CD14-positive monocyte (primary cell): ENCODE measurements at regions of chr3 and their contacts with region 1.

Region 1: DNA sequence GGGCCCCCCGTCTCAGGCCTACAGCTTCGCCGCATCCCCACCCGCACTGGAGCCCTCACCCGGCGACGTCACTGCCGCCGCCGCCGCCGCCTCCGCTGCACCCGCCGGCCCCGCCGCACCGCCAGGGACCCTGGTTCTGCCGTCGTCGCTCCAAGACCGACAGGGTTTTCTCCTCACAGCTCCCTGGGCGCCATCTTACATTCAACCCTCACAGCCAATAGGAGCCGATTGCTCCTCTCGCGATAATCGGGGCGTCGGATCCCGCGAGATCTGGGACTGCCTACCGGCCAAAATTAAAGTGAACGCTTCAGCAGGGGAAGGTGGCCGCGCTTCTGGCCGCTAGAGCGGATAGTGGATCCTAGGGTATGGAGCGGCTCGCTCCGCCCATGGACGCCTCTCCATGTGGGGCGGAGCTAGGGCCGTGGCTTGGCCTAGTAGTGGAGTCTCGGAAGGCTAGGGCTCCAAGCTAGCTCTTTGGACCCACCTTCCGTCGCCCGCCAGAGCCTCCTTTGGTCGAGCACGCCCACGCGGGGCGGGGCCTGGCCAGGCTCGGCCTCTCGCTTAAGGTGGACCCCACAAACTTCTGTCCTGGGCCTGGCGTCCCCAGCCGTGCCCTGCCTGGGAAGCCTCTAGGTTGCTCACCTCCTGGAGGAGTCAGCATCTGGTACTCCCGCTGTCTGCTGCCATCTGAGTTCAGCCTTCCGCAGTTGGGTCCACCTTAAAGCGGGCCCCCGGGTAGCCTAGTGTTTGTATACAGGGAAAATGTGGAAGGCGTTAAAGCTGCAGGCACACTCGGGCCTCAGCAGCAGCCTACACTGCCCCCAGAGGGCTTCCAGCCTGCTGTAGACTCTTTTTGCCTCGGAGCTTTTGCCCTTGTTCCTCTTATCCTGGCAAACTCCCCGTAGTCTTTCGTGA is at the start of gene QRICH1:
- DNase-seq: peak; percentile 94 to 96 (median 95)
- H3K4me3 ChIP-seq: peak within 1 kb of the TSS; percentile 55 to 87 (median 78)
- H3K4me3 Mint-ChIP-seq: peak within 1 kb of the TSS; percentile 87 to 93
- H3K27ac ChIP-seq: peak within 1 kb of the TSS; percentile 75 to 93
- H3K27ac Mint-ChIP-seq: peak within 1 kb of the TSS; percentile 92 to 98 (median 96)
- H3K4me1 ChIP-seq: peaks cover 20 to 31% of the 10 kb centered on the region in 2 donors
- H3K4me1 Mint-ChIP-seq: peaks cover 21% of the 10 kb centered on the region
- H3K27me3 ChIP-seq: no peaks in the 10 kb centered on the region
- H3K27me3 Mint-ChIP-seq: no peaks in the 10 kb centered on the region
- CTCF ChIP-seq: peak; percentile 49
- polyA plus RNA-seq, gene QRICH1: 9.3 to 150 (median 16.1) TPM

Region 2: DNA sequence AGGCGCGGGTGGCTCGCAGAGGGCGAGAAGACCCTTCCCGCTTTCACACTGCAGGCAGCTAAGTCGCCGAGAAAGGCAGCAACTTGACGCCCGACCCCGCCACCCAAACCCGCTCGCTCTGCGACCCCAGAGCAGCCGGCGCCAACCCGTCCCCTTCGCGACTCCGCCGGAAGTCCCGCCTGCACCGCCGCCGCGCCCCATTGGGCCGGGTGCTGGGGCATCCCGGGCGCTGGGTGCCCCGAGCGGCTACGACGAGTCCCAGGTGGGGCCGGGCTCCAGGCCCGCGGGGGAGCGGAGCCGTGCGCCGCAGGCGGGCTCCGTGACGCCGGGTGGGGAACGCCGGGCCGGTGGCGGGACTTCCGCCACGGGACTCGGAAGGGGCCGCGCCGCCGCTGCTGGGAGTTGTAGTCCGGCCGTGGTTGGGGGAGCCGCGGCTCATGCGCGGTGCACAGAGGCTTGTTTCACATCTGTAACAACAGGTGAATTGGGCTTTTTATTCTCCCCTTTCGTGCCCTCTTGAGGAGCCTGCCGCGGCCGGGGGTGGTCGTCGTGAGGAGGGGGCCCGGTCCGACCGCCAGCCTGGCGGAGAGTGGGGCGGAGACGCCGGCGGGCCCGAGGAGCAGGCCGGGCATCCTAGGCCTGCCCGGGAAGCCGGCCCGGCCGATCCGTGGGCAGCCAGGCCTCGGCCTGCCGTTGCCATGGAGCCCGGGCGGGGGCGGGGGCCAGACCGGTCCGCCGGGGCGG is 1291.2 kb before region 1 on chr3 and contains the start of gene DHX30:
- intact Hi-C with region 1: no loop called
- DNase-seq: peak; percentile 60 to 76 (median 69)
- H3K4me3 ChIP-seq: peak within 1 kb of the TSS; percentile 65 to 91 (median 87)
- H3K4me3 Mint-ChIP-seq: peak within 1 kb of the TSS; percentile 88 to 94
- H3K27ac ChIP-seq: peak within 1 kb of the TSS; percentile 58 to 83
- H3K27ac Mint-ChIP-seq: peak within 1 kb of the TSS; percentile 77 to 93 (median 87)
- H3K4me1 ChIP-seq: peaks cover 13 to 17% of the 10 kb centered on the region in 2 donors
- H3K4me1 Mint-ChIP-seq: peaks cover 21% of the 10 kb centered on the region
- H3K27me3 ChIP-seq: no peaks in the 10 kb centered on the region
- H3K27me3 Mint-ChIP-seq: peaks cover 0 to 4% (median 1%) of the 10 kb centered on the region in 3 donors
- CTCF ChIP-seq: no peak
- polyA plus RNA-seq, gene DHX30: 19.4 to 43.9 (median 20.1) TPM

Region 3: GRCh38 chr3:49021813-49022687 is 72.1 kb before region 1 on chr3 and contains the start of gene NDUFAF3:
- intact Hi-C with region 1: loop called (anchors 5 kb)
- DNase-seq: peak; percentile 89 to 93 (median 93)
- H3K4me3 ChIP-seq: peak within 1 kb of the TSS; percentile 71 to 90 (median 84)
- H3K4me3 Mint-ChIP-seq: peak within 1 kb of the TSS; percentile 90 to 92
- H3K27ac ChIP-seq: peak within 1 kb of the TSS; percentile 98
- H3K27ac Mint-ChIP-seq: peak within 1 kb of the TSS; percentile 96 to 99 (median 98)
- H3K4me1 ChIP-seq: peaks cover 41 to 49% of the 10 kb centered on the region in 2 donors
- H3K4me1 Mint-ChIP-seq: peaks cover 34% of the 10 kb centered on the region
- H3K27me3 ChIP-seq: no peaks in the 10 kb centered on the region
- H3K27me3 Mint-ChIP-seq: peaks cover 0 to 2% (median 0%) of the 10 kb centered on the region in 3 donors
- CTCF ChIP-seq: peak; percentile 100
- polyA plus RNA-seq, gene NDUFAF3: 42.1 to 93.4 (median 88.8) TPM

Region 4: DNA sequence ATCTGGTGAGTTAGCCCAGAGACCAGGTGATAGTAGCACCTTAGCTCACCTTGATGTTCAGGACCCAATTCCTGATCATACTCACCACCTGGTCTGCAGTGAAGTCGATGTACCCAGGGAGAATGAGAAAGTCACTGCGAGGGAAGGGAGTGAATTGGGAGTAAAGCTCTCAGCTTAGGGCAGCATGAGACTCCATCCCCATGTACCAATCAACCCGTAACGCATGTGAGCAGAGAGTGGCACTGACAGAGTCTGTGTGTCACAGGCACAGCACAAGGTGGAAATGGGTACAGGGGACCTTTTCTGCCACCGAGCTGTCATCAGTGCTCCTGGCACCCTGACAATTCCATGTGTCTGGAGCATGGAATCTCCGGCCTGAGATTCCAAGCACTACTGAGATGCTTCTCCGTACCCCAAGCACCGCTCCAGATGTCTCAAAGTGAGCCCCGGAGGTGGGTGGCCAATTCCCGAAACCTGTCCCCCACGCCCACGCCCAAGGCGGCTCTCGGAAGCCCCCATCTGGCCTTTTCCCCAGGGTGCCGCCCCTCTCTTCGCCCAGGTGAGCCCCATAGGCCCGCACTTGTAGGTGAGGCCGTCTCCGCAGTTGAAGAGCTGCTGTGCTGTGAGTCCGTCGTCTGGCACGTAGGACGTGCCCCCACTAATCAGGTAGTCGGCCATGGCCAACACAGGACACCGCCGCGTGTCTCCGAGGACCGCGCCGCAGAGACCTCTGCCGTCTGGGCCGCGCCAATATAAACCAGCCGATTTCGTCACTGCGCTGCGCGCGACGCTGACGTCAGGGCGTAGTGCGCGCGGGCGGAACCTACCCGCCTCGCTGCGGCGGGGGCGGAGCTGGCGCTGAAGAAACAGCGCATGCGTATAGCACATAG is 65.2 kb before region 1 on chr3 and contains the start of gene IMPDH2:
- intact Hi-C with region 1: loop called (anchors 5 kb)
- DNase-seq: peak; percentile 95 to 97 (median 96)
- H3K4me3 ChIP-seq: peak within 1 kb of the TSS; percentile 57 to 76 (median 62)
- H3K4me3 Mint-ChIP-seq: peak within 1 kb of the TSS; percentile 79 to 91
- H3K27ac ChIP-seq: peak within 1 kb of the TSS; percentile 77 to 92
- H3K27ac Mint-ChIP-seq: peak within 1 kb of the TSS; percentile 88 to 98 (median 97)
- H3K4me1 ChIP-seq: peaks cover 14 to 20% of the 10 kb centered on the region in 2 donors
- H3K4me1 Mint-ChIP-seq: peaks cover 25% of the 10 kb centered on the region
- H3K27me3 ChIP-seq: no peaks in the 10 kb centered on the region
- H3K27me3 Mint-ChIP-seq: no peaks in the 10 kb centered on the region
- CTCF ChIP-seq: peak; percentile 8
- polyA plus RNA-seq, gene IMPDH2: 20.8 to 67.3 (median 21.0) TPM

Region 5: GRCh38 chr3:49057268-49057667 is 36.8 kb before region 1 on chr3:
- intact Hi-C with region 1: no loop called
- DNase-seq: no peak
- H3K4me3 ChIP-seq: no peak overlapping the region
- H3K4me3 Mint-ChIP-seq: no peak overlapping the region
- H3K27ac ChIP-seq: no peak overlapping the region
- H3K27ac Mint-ChIP-seq: no peak overlapping the region
- H3K4me1 ChIP-seq: no peaks in the 10 kb centered on the region
- H3K4me1 Mint-ChIP-seq: no peaks in the 10 kb centered on the region
- H3K27me3 ChIP-seq: no peaks in the 10 kb centered on the region
- H3K27me3 Mint-ChIP-seq: no peaks in the 10 kb centered on the region
- CTCF ChIP-seq: no peak

Region 6: DNA sequence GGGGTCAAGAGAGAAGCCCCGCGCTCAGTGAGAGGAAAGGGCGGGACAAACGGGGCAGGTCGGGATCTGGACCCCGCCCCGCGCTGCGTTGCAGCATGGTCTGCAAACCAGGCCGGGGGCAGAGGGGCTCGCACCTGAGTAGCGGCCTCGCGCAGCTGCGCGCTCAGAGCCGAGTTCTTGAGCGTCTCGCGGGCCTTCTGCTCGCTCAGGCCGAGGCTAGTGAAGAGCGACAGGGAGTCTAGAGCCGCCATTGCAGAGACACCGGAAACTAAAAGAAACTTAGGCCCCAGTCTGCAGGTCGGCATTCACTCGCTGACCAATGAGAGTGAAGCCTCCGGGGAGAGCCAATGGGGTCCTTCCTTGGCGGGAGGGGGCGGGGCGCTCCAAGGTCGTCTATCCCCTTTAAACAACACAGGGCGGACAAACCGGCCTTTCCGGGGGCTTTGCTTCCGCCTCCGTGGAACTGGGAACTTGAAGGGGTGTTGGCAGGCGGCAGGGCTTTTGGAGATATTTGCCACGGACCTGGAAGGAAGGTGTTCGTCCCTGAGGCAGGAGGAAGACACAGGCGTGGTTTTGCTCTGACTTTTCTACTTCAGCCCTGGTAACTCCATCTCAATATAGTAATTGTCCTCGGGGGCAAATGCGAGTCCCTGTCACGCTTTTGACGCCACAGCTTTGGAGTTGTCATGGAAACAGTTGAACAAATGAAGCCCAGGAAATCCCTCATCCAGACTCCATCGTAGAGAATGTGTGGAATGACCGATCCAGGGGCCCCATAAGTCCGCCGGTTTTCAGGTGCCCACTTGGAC is 10.6 kb after region 1 on chr3 and contains the start of gene QARS1:
- intact Hi-C with region 1: loop called in 1 of 2 experiments (anchors 1 kb)
- DNase-seq: peak; percentile 77 to 89 (median 84)
- H3K4me3 ChIP-seq: peak within 1 kb of the TSS; percentile 80 to 92 (median 84)
- H3K4me3 Mint-ChIP-seq: peak within 1 kb of the TSS; percentile 95 to 98
- H3K27ac ChIP-seq: peak within 1 kb of the TSS; percentile 58 to 86
- H3K27ac Mint-ChIP-seq: peak within 1 kb of the TSS; percentile 93 to 97 (median 95)
- H3K4me1 ChIP-seq: peaks cover 14 to 28% of the 10 kb centered on the region in 2 donors
- H3K4me1 Mint-ChIP-seq: peaks cover 25% of the 10 kb centered on the region
- H3K27me3 ChIP-seq: no peaks in the 10 kb centered on the region
- H3K27me3 Mint-ChIP-seq: peaks cover 0 to 2% (median 1%) of the 10 kb centered on the region in 3 donors
- CTCF ChIP-seq: no peak
- polyA plus RNA-seq, gene QARS1: 142 to 326 (median 142) TPM

Region 7: GRCh38 chr3:49238274-49239127 is 144.4 kb after region 1 on chr3:
- intact Hi-C with region 1: no loop called
- DNase-seq: peak; percentile 93 to 99 (median 98)
- H3K4me3 ChIP-seq: peak overlapping the region in 1 of 3 experiments; percentile 41
- H3K4me3 Mint-ChIP-seq: peak overlapping the region; percentile 43 to 60
- H3K27ac ChIP-seq: peak overlapping the region; percentile 96 to 99
- H3K27ac Mint-ChIP-seq: peak overlapping the region; percentile 96 to 98 (median 97)
- H3K4me1 ChIP-seq: peaks cover 30% of the 10 kb centered on the region in 2 donors
- H3K4me1 Mint-ChIP-seq: peaks cover 23% of the 10 kb centered on the region
- H3K27me3 ChIP-seq: no peaks in the 10 kb centered on the region
- H3K27me3 Mint-ChIP-seq: peaks cover 0 to 2% (median 0%) of the 10 kb centered on the region in 3 donors
- CTCF ChIP-seq: no peak